Mammary epithelial cell (primary cell): ENCODE measurements at regions of chr1 and their contacts with region 1.

Region 1: DNA sequence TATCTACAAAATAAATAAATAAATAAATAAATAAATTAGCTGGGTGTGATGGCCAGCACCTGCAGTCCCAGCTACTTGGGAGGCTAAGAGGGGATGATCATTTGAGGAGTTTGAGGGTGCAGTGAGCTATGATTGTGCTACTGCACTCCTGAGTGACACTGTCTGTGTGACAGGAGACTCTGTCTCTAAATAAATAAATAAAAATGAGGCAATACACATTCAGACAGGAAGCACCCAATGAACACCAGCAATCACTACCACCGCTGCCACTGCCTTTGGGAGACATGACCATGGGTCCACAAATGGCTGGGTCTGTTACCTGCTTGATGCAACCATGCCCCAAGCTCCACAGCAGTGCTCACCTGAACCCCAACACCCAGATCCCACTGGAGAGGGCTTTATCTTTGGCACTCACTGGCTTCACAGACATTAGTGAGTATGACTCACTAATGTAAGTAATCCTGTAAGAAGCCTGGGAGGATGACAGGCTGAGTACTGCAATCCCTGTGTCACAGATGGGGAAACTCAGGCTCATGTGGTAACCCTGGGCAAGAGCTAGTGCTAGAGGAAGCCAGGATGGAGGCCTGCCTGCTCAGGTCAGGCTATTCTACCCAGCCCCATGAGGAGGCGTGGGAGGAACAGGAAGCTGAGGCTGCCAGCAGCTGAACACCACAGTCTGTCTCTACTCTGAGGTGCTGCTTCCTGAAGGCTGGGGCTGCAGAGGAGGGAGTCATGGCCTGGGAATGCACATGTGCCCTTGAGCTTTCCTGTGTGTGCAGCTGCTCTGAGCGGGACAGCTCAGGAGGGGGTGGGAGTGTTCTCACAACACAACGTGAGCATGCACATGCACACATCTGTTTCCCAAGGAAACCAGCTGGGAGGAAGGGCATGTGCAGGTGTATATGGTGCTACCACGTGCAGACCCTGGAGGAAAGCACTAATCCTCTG is 43.0 kb downstream of the SLC9A1 start:
- DNase-seq: peak; percentile 100
- H3K4me3 ChIP-seq: no peak overlapping the region
- H3K27ac ChIP-seq: peak overlapping the region; percentile 43
- H3K4me1 ChIP-seq: peaks cover 35% of the 10 kb centered on the region
- H3K27me3 ChIP-seq: no peaks in the 10 kb centered on the region
- CTCF ChIP-seq: peak; percentile 8 to 65

Region 2: DNA sequence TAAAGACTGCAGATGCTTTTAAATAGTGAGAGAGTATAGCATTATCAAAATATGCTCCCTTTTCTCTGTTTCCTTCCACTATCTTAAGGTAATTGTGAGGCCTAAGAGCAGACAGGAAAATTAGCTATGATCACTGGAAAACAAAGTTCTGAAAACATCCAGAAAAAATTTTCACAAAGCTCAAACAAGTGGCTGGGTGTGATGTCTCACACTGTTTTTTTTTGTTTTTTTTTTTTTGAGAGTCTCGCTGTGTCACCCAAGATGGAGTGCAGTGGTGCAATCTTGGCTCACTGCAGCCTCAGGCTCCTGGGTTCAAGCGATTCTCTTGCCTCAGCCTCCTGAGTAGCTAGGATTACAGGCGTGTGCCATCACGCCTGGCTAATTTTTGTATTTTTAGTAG is 129.8 kb after region 1 on chr1:
- CTCF ChIA-PET with region 1: no interaction called
- dilution Hi-C with region 1: no loop called
- in situ Hi-C with region 1: no loop called
- intact Hi-C with region 1: loop called (anchors 5 kb)
- DNase-seq: no peak
- H3K4me3 ChIP-seq: no peak overlapping the region
- H3K27ac ChIP-seq: no peak overlapping the region
- H3K4me1 ChIP-seq: no peaks in the 10 kb centered on the region
- H3K27me3 ChIP-seq: no peaks in the 10 kb centered on the region
- CTCF ChIP-seq: no peak